CD8-positive, alpha-beta memory T cell (primary cell): ENCODE measurements at regions of chr7 and their contacts with region 1.

Region 1: GRCh38 chr7:135170274-135170997 is at the start of gene CYREN:
- DNase-seq: peak; percentile 81 to 92 (median 85)
- H3K4me3 ChIP-seq: peak within 1 kb of the TSS; percentile 64
- H3K4me3 Mint-ChIP-seq: peak within 1 kb of the TSS; percentile 86 to 97 (median 89)
- H3K27ac ChIP-seq: peak within 1 kb of the TSS; percentile 92
- H3K27ac Mint-ChIP-seq: peak within 1 kb of the TSS; percentile 93 to 99 (median 96)
- H3K4me1 ChIP-seq: peaks cover 17% of the 10 kb centered on the region
- H3K4me1 Mint-ChIP-seq: peaks cover 39 to 57% (median 54%) of the 10 kb centered on the region in 3 donors
- H3K27me3 ChIP-seq: no peaks in the 10 kb centered on the region
- H3K27me3 Mint-ChIP-seq: no peaks in the 10 kb centered on the region
- total RNA-seq, gene CYREN: 77.2 to 79.9 TPM

Region 2: GRCh38 chr7:134986363-134987251 is 183.8 kb before region 1 on chr7 and contains the start of gene AGBL3:
- CTCF ChIA-PET with region 1: interaction called, 82 read pairs
- POLR2A ChIA-PET with region 1: interaction called, 5 read pairs
- DNase-seq: peak; percentile 77 to 95 (median 88)
- H3K4me3 ChIP-seq: peak within 1 kb of the TSS; percentile 98
- H3K4me3 Mint-ChIP-seq: peak within 1 kb of the TSS; percentile 94 to 99 (median 97)
- H3K27ac ChIP-seq: peak within 1 kb of the TSS; percentile 88
- H3K27ac Mint-ChIP-seq: peak within 1 kb of the TSS; percentile 92 to 100 (median 99)
- H3K4me1 ChIP-seq: peaks cover 17% of the 10 kb centered on the region
- H3K4me1 Mint-ChIP-seq: peaks cover 36 to 62% (median 57%) of the 10 kb centered on the region in 3 donors
- H3K27me3 ChIP-seq: no peaks in the 10 kb centered on the region
- H3K27me3 Mint-ChIP-seq: peaks cover 0 to 3% of the 10 kb centered on the region in 2 donors
- total RNA-seq, gene AGBL3: 2.5 to 3.2 TPM

Region 3: DNA sequence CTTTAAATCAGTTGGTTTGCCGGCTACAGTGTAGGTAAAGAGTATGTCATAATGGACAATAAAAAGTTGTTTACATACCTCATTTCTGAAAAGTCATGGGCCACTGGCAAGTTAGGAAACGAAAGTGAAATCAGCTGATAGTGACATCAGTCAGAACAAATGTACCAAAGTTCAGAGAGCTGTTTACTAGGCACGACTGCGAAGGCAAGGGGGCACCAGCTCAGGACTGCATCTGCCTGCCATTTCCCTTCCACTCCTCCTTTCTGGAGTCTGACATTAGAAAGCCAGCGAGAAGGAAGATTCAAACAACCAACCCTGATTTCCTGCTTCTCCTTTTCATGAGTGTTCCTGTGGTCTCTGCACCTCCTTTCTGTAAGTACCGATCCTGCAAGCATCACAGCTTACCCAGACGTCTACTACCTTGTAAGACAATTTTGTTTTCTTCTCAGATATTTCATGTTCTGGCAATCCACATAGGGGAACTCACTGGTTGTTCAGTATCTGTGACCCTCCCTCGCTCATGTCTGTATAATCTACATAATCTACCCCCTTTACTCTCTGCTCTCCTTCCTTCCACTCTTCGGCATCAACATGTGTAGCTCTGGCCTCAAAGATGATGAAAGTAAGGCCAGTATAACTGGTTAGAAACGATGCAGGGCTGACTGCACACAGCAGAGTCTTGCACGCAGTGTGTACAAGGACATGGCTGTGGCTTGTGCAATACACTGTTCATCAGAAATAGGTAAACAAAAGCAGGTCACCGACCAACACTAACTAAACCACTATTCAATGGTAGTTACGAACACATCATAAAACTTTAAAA is 22.3 kb before region 1 on chr7 and contains the start of gene TMEM140:
- CTCF ChIA-PET with region 1: interaction called, 33 read pairs
- POLR2A ChIA-PET with region 1: interaction called, 39 read pairs
- DNase-seq: peak; percentile 29 to 85 (median 72)
- H3K4me3 ChIP-seq: peak within 1 kb of the TSS; percentile 52
- H3K4me3 Mint-ChIP-seq: peak within 1 kb of the TSS; percentile 89 to 96 (median 92)
- H3K27ac ChIP-seq: peak within 1 kb of the TSS; percentile 80
- H3K27ac Mint-ChIP-seq: peak within 1 kb of the TSS; percentile 94 to 98 (median 97)
- H3K4me1 ChIP-seq: peaks cover 46% of the 10 kb centered on the region
- H3K4me1 Mint-ChIP-seq: peaks cover 69 to 80% (median 80%) of the 10 kb centered on the region in 3 donors
- H3K27me3 ChIP-seq: no peaks in the 10 kb centered on the region
- H3K27me3 Mint-ChIP-seq: peaks cover 0 to 1% of the 10 kb centered on the region in 2 donors
- total RNA-seq, gene TMEM140: 6.6 to 7.0 TPM

Region 4: DNA sequence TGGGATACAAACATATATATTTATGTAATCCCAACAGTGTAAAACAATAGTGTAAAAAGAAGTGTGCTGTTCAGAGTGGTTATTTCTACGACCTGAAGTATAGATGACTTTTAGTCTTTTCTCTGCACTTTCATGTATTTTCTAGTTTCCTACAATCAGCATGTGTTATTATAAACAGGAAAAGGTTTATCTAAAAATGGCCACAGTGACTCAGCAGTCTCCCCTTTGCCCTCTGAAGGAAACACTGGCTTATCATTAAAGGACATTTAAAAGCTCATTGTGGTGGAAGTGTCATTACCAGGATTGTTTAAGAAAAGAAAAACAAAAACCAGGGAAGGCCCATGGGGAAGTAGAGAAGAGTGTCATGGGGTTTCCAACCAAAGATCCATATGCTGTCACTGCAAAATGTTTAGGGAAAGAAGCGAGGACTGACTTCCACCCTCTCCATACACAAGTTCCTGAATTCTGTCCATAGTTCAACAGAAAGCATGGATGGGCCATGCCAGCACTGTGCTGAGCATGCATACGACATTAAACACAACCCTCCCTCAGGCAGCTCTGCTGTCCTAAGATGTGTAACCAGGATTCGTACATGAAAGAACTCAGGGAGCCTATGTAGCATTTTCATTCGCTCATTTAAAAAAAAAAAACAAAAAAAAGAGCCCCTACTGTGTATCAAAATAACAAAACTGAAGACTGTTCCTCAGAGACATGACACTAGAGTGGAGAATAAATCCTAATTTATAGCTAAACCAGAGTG is 10.2 kb before region 1 on chr7:
- CTCF ChIA-PET with region 1: interaction called, 28 read pairs
- POLR2A ChIA-PET with region 1: interaction called, 7 read pairs
- DNase-seq: no peak
- H3K4me3 ChIP-seq: no peak overlapping the region
- H3K4me3 Mint-ChIP-seq: peak overlapping the region in 5 of 7 donors; percentile 13 to 59 (median 42)
- H3K27ac ChIP-seq: peak overlapping the region; percentile 74
- H3K27ac Mint-ChIP-seq: peak overlapping the region; percentile 13 to 92 (median 76)
- H3K4me1 ChIP-seq: peaks cover 42% of the 10 kb centered on the region
- H3K4me1 Mint-ChIP-seq: peaks cover 57 to 88% (median 79%) of the 10 kb centered on the region in 3 donors
- H3K27me3 ChIP-seq: no peaks in the 10 kb centered on the region
- H3K27me3 Mint-ChIP-seq: no peaks in the 10 kb centered on the region

Region 5: DNA sequence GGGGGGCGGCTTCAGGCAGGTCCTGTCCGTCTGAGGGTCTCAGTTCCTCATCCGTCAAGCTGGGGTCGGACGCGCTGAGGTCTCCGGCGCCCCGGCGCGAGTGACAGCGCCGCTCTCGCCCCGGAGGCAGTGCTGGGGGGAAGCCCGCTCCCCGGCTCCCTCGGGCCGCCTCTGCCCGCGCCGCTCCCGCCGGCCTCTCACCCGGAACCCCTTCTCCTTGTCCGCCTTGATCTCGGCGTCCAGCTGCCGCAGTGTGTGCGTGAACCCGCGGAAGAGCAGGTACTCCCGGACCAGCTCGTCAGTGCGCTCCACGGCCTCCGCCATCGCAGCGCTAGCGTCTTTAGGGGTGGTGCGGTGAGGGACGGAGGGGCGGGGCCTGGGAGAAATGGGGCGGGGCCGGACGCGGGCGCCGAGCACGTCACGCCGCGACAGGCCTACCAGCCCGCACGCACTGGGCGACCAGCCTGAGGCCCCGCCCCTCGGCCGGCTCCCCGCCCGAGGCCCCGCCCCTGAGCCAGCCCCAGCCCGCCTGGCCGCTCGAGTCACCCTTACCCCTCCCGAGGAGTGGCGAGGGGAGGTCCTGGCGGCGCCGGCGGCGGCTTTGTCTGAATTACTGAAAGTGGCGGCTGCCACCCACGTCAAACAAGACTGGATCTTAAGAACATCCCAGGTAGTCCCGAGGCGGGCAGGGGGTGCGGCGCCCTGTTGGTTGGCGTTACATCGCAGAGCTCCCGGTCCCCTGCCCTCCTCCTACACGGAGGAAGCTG is 40.9 kb after region 1 on chr7 and contains the start of gene WDR91:
- CTCF ChIA-PET with region 1: interaction called, 15 read pairs
- POLR2A ChIA-PET with region 1: interaction called, 14 read pairs
- DNase-seq: peak; percentile 88 to 98 (median 96)
- H3K4me3 ChIP-seq: peak within 1 kb of the TSS; percentile 80
- H3K4me3 Mint-ChIP-seq: peak within 1 kb of the TSS; percentile 90 to 97 (median 95)
- H3K27ac ChIP-seq: peak within 1 kb of the TSS; percentile 86
- H3K27ac Mint-ChIP-seq: peak within 1 kb of the TSS; percentile 86 to 99 (median 99)
- H3K4me1 ChIP-seq: peaks cover 15% of the 10 kb centered on the region
- H3K4me1 Mint-ChIP-seq: peaks cover 26 to 48% (median 33%) of the 10 kb centered on the region in 3 donors
- H3K27me3 ChIP-seq: no peaks in the 10 kb centered on the region
- H3K27me3 Mint-ChIP-seq: no peaks in the 10 kb centered on the region
- total RNA-seq, gene WDR91: 25.1 to 27.7 TPM